ENCODE measurements at regions of chr9 and their contacts with region 1.

Region 1: GRCh38 chr9:137240861-137241489 is at the start of gene TUBB4B:
- DNase-seq: peak; percentile 99
- H3K4me3 Mint-ChIP-seq: peak within 1 kb of the TSS; percentile 88
- H3K27ac Mint-ChIP-seq: peak within 1 kb of the TSS; percentile 94
- H3K4me1 Mint-ChIP-seq: peaks cover 47% of the 10 kb centered on the region
- H3K27me3 Mint-ChIP-seq: no peaks in the 10 kb centered on the region
- total RNA-seq, gene TUBB4B: 314 to 319 TPM

Region 2: DNA sequence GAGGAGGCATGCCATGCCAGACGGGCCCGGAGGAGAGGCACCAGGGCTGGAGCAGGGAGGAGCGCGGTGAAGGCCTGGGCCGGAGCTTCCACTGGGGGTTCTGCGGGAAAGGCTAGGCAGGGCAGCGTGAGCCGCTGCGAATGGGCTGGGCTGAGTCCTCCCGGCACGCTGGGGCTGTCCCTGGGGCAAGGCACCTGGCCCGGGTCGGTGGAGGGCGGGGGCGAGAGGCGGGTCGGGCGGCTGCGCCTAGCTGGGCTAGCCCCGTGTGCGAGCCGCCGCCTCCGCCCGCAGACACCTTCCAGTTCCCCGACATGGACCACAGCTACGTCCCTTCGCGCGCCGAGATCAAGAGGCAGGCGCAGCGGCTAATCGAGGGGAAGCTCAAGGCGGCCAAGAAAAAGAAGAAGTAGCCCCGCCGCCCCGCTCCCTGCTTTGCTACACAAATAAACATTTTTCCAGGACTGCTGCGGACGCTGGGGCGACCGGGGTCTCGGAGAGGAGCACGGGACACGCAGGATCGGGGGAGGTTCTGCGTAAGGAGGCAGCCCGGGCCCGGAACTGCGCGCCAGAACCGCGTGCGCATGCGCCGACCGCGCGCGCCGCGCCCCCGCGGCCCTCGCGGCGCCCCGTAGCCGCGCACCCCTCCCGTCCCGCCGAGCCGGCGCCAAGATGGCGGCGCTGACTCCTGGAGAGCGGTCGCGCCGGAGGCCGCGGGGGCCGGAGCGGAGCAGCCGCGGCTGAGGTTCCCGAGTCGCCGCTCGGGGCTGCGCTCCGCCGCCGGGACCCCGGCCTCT is 433.5 kb before region 1 on chr9 and contains the start of gene RABL6:
- CTCF ChIA-PET with region 1: no interaction called
- POLR2A ChIA-PET with region 1: interaction called, 11 read pairs
- DNase-seq: peak; percentile 84
- H3K4me3 Mint-ChIP-seq: peak within 1 kb of the TSS; percentile 87
- H3K27ac Mint-ChIP-seq: peak within 1 kb of the TSS; percentile 76
- H3K4me1 Mint-ChIP-seq: peaks cover 37% of the 10 kb centered on the region
- H3K27me3 Mint-ChIP-seq: peaks cover under 1% of the 10 kb centered on the region
- total RNA-seq, gene RABL6: 96.0 to 96.2 TPM

Region 3: DNA sequence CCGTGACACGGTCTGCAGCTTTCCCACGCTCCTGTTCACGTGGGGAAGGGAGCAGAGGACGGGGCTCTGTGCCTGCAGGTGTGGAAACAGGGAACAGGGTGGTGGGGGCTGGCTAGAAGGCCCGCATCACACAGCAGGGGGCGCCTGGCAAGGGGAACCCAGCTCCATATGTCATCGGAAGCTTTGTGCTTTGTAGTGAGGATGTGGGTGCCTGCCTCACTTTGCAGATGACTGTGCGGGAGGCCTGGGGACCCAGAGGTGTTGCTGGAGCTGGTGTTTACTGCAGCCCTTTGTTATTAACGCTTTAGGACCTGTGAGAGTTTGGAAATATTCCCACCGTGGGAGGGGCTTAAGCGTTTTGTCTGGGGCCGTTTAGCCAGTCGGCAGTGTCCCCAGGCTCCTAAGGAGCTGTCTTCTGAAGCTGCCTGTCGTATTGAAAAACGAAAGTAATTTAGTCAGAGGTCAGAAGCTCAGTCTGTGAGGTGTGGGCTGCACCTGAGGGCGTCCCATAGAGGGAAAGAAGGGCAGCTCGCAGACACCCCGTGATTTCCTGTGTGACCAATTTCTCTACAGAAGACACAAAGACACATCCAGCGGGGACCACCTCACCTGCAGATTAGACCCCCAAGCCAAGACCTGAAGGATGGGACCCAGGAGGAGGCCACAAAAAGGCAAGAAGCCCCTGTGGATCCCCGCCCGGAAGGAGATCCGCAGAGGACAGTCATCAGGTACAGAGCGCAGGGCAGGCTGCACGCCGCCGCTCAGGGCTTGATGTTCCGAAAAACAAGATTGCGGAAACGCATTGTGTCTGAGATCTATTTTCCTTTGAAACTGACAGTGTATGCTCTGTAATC is 145.1 kb before region 1 on chr9:
- CTCF ChIA-PET with region 1: interaction called, 13 read pairs
- POLR2A ChIA-PET with region 1: interaction called, 21 read pairs
- DNase-seq: peak; percentile 91
- H3K4me3 Mint-ChIP-seq: peak overlapping the region; percentile 62
- H3K27ac Mint-ChIP-seq: peak overlapping the region; percentile 89
- H3K4me1 Mint-ChIP-seq: peaks cover 21% of the 10 kb centered on the region
- H3K27me3 Mint-ChIP-seq: no peaks in the 10 kb centered on the region

Region 4: DNA sequence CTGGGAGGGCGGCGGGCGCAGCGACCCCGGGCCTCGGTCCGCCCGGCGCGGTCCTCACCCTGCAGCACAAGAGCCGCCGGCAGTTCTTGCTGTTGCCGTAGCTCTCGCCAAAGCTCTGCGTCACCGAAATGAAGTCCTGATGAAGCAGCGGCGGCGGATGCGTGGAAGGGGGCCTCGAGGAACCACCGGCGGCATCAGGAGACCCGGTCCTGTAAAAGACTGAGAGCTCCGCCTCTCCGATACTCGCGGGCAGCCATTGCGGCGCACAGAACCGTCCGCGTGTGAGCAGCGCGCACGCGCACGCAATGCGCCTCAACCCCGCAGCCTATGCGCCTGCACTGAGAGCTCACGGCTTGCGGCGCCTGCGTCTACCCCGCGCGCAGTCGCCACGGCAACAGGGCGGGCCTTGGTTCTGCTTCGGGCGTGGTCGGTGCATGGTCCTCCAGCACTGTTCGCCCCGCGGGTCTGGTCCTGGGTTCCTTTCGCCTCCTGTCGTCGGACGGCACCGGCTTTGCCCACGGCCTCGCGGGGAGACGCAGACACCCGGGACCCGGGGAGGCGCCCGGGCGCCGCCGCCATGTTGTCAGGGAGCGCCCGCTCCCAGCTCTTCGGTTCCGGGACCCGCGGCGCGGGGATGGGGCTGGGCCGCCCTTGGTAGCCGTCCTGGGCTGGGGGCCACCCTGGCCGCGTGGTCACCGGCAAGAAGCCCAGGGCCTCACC is 111.4 kb before region 1 on chr9:
- CTCF ChIA-PET with region 1: interaction called, 21 read pairs
- POLR2A ChIA-PET with region 1: interaction called, 37 read pairs
- DNase-seq: peak; percentile 93
- H3K4me3 Mint-ChIP-seq: peak overlapping the region; percentile 81
- H3K27ac Mint-ChIP-seq: peak overlapping the region; percentile 83
- H3K4me1 Mint-ChIP-seq: peaks cover 30% of the 10 kb centered on the region
- H3K27me3 Mint-ChIP-seq: peaks cover 4% of the 10 kb centered on the region

Region 5: DNA sequence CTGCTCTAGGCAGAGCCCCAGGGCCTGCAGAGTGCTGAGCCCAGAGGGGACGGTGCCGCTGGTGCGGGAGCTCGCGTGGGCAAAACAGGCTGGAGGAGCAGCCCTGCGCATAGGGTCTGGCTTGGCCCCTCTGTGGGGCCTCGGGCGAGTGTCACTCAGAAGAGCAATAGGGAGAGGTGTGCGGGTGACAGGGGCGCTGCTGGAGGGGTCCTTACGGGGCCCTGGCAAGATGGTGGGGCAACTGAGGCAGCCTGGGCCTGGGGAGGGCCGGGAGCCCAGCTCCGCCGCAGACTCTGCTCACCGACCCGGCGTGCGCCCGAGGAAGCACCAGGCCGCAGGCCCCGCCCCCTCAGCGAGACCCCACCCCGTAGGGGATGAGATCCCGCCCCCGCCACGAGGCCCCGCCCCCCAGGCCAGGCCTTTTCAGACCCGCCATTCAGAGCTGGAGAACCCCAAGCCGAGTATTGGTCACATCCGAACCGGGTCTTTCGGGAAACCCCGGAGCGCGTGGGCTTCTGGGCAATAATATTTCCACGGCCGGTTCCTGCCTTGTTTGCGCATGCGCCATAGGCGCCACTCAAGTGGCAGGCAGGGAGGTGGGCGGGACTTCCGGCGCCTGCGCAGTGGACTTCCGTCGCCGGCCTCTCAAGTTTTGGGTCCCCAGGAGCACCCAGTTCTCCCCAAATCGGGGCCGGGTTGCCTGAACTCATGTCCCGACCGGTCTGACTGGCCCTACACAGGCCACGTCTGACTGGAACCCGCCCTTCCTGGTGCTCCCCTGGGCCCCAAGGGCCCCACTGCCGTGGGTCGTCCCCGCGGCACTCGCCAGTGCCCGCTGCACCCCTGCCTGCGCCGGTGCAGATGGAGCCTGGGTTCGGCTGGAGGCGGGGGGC is 17.7 kb before region 1 on chr9:
- CTCF ChIA-PET with region 1: interaction called, 18 read pairs
- POLR2A ChIA-PET with region 1: interaction called, 63 read pairs
- DNase-seq: peak; percentile 99
- H3K4me3 Mint-ChIP-seq: peak overlapping the region; percentile 74
- H3K27ac Mint-ChIP-seq: peak overlapping the region; percentile 79
- H3K4me1 Mint-ChIP-seq: peaks cover 27% of the 10 kb centered on the region
- H3K27me3 Mint-ChIP-seq: no peaks in the 10 kb centered on the region

Region 6: GRCh38 chr9:137277329-137278041 is 36.5 kb after region 1 on chr9 and contains the start of gene TOR4A:
- CTCF ChIA-PET with region 1: interaction called, 5 read pairs
- POLR2A ChIA-PET with region 1: interaction called, 18 read pairs
- DNase-seq: peak; percentile 73
- H3K4me3 Mint-ChIP-seq: peak within 1 kb of the TSS; percentile 84
- H3K27ac Mint-ChIP-seq: peak within 1 kb of the TSS; percentile 79
- H3K4me1 Mint-ChIP-seq: peaks cover 26% of the 10 kb centered on the region
- H3K27me3 Mint-ChIP-seq: no peaks in the 10 kb centered on the region
- total RNA-seq, gene TOR4A: 22.4 to 23.2 TPM

Region 7: GRCh38 chr9:137307255-137308056 is 66.5 kb after region 1 on chr9:
- CTCF ChIA-PET with region 1: no interaction called
- POLR2A ChIA-PET with region 1: no interaction called
- DNase-seq: no peak
- H3K4me3 Mint-ChIP-seq: no peak overlapping the region
- H3K27ac Mint-ChIP-seq: no peak overlapping the region
- H3K4me1 Mint-ChIP-seq: peaks cover 10% of the 10 kb centered on the region
- H3K27me3 Mint-ChIP-seq: peaks cover 2% of the 10 kb centered on the region